ENCODE measurements at regions of chr7 and their contacts with region 1.

Region 1: GRCh38 chr7:134432296-134433152 is 26.4 kb downstream of the AKR1B1 start:
- DNase-seq: peak; percentile 88
- CTCF ChIP-seq: peak; percentile 69

Region 2: DNA sequence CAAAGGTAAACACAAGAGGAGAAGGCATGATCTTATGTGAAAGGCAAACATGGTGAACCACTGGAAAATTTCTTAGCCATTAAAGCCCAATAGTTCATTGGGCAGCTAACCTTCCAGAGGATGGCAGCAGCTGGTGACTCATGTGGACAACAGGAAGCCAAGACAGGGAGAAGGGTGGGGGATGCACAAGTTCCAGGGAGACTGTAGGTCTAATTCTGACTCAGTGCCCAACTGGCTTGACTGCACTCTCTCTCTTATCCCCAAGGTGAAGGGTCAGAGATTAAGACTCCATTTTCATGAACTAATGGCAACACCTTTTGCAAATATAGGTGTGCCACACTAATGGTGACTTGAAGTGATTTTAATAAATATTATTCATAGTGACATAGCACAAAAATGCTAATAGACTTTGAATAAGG is 67.9 kb before region 1 on chr7:
- CTCF ChIA-PET with region 1: no interaction called
- POLR2A ChIA-PET with region 1: no interaction called
- DNase-seq: no peak
- CTCF ChIP-seq: no peak

Region 3: GRCh38 chr7:134391223-134391622 is 41.3 kb before region 1 on chr7:
- CTCF ChIA-PET with region 1: no interaction called
- POLR2A ChIA-PET with region 1: no interaction called
- DNase-seq: no peak
- CTCF ChIP-seq: no peak

Region 4: DNA sequence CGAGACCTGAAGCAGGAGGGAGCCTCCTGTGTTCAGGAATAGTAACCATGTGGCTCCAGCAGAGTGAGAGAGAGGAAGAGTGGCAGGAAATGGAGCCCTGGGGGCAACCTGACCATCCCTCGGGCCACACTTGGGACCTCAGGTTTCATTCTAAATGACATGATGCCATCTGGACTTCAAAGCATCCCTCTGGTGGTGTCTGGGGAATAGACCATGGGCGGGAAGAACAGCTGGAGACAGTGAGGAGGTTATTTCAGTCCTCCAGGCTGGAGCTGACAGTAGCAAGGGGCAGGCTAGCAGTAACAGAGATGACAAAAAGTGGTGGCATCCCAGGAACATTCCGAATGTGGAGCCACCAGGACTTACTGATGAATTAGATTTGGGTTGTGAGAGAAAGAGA is 18.4 kb before region 1 on chr7:
- CTCF ChIA-PET with region 1: interaction called, 18 read pairs
- POLR2A ChIA-PET with region 1: no interaction called
- DNase-seq: no peak
- CTCF ChIP-seq: no peak

Region 5: GRCh38 chr7:134448700-134449229 is 16.2 kb after region 1 on chr7:
- CTCF ChIA-PET with region 1: interaction called, 26 read pairs
- POLR2A ChIA-PET with region 1: no interaction called
- DNase-seq: no peak
- CTCF ChIP-seq: no peak

Region 6: DNA sequence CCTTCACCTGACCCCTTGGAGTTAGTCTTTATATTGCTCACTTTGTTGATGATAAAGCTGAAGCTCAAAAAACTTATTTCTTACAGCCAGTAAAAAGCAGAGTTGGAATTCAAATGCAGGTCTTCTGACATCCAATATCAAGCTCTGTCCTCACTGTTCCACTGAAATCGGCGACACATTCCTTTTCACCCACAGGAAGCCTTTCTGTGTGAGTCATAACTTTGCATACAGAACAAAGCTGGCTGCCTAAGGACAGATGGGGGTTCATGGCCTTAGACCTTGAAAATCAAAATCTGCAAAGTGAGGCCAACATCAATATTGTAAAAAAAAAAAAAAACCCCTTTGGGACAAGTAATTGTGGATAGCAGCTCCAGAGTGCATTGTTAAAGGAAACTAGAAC is 48.2 kb after region 1 on chr7:
- CTCF ChIA-PET with region 1: interaction called, 26 read pairs
- POLR2A ChIA-PET with region 1: no interaction called
- DNase-seq: no peak
- CTCF ChIP-seq: no peak

Region 7: GRCh38 chr7:134547397-134548054 is 115.0 kb after region 1 on chr7:
- CTCF ChIA-PET with region 1: interaction called, 40 read pairs
- POLR2A ChIA-PET with region 1: no interaction called
- DNase-seq: peak; percentile 58
- CTCF ChIP-seq: peak; percentile 78

Measured in GM10248 (cell line).